CD8-positive, alpha-beta T cell (primary cell): ENCODE measurements at regions of chr7 and their contacts with region 1.

Region 1: GRCh38 chr7:130961128-130961601 is 227.2 kb upstream of the KLF14 start:
- DNase-seq: peak in 7 of 9 experiments; percentile 35 to 94 (median 54)
- ATAC-seq: peak; percentile 73
- H3K4me3 ChIP-seq: peak overlapping the region; percentile 34 to 35
- H3K4me3 Mint-ChIP-seq: peak overlapping the region; percentile 83
- H3K27ac ChIP-seq: peak overlapping the region; percentile 63 to 72
- H3K27ac Mint-ChIP-seq: peak overlapping the region; percentile 92
- H3K4me1 ChIP-seq: peaks cover 67% of the 10 kb centered on the region
- H3K4me1 Mint-ChIP-seq: peaks cover 63% of the 10 kb centered on the region
- H3K27me3 ChIP-seq: no peaks in the 10 kb centered on the region
- H3K27me3 Mint-ChIP-seq: no peaks in the 10 kb centered on the region
- CTCF ChIP-seq: no peak

Region 2: GRCh38 chr7:130941322-130942210 is 19.6 kb before region 1 on chr7:
- CTCF ChIA-PET with region 1: interaction called, 8 read pairs
- POLR2A ChIA-PET with region 1: interaction called, 10 read pairs
- intact Hi-C with region 1: loop called in 1 of 2 experiments (anchors 2 kb)
- DNase-seq: peak in 3 of 9 experiments; percentile 45 to 78 (median 70)
- ATAC-seq: no peak
- H3K4me3 ChIP-seq: peak overlapping the region; percentile 25 to 55
- H3K4me3 Mint-ChIP-seq: peak overlapping the region; percentile 82
- H3K27ac ChIP-seq: peak overlapping the region; percentile 45 to 90
- H3K27ac Mint-ChIP-seq: peak overlapping the region; percentile 89
- H3K4me1 ChIP-seq: peaks cover 74% of the 10 kb centered on the region
- H3K4me1 Mint-ChIP-seq: peaks cover 87% of the 10 kb centered on the region
- H3K27me3 ChIP-seq: no peaks in the 10 kb centered on the region
- H3K27me3 Mint-ChIP-seq: no peaks in the 10 kb centered on the region
- CTCF ChIP-seq: no peak

Region 3: DNA sequence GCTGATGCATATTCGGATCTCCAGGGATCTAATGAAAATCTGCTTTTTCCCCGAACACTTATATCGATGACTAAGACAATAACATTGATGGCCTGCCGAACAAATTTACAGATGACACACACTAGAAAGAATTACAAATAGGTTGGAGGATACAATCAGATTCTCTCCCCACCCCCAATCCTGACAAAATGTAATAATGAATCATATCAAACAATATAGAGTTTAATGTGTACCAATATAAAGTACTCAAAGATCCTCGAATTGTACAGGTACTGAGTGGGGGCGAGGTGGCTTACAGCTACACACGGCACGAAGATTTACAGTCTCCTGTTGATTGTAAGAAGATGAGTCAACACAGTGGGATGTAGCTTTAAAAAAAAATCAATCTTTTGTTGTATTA is 183.9 kb after region 1 on chr7:
- CTCF ChIA-PET with region 1: no interaction called
- POLR2A ChIA-PET with region 1: no interaction called
- intact Hi-C with region 1: no loop called
- DNase-seq: no peak
- ATAC-seq: no peak
- H3K4me3 ChIP-seq: no peak overlapping the region
- H3K4me3 Mint-ChIP-seq: no peak overlapping the region
- H3K27ac ChIP-seq: no peak overlapping the region
- H3K27ac Mint-ChIP-seq: no peak overlapping the region
- H3K4me1 ChIP-seq: no peaks in the 10 kb centered on the region
- H3K4me1 Mint-ChIP-seq: no peaks in the 10 kb centered on the region
- H3K27me3 ChIP-seq: no peaks in the 10 kb centered on the region
- H3K27me3 Mint-ChIP-seq: peaks cover 5% of the 10 kb centered on the region
- CTCF ChIP-seq: no peak